PC-9 (cell line): ENCODE measurements at regions of chr7 and their contacts with region 1.

Region 1: DNA sequence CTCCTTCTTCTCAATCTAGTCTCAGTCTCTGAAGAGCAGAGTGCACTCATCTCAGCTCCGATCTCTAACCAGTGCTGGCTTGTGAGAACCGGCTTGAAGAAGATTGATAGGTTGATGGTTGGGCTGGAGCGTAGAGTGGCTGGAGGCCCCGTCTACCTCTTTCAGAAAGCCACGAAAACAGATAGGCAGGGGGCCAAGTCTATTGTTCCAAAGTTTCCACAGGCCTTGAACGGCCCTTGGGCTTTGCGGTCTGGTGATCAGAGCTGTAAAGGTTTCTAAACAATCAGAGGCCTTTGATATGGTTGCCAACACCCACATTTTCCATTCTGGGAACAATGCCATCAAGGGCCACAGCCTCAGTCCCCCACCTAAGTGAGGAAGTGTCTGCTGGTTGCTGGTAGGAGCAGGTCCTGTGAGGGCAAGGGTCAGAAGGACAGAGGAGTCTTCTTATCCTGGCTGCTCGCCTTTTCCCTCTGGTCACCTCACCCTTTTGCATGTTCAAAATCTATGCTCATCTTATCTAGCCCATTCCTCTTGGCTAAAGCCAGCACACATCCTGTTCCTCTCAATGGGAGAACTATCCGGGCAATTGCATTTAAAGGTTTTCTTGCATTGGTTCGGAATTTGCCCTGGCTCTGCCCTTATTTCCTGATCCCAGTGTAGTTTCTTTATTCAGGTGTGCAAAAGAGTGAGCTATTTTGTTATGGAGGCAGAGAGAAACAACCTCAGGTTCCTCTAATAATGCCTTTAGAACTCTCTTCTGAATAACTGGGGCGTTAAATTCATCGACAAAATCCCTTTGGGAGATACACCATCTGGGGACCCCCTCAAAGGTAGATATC is 70.3 kb upstream of the KMT2E start:
- DNase-seq: peak; percentile 48 to 96
- H3K4me3 ChIP-seq: no peak overlapping the region
- H3K27ac ChIP-seq: no peak overlapping the region
- H3K4me1 ChIP-seq: no peaks in the 10 kb centered on the region; the same call in 1 of the 2 replicates
- H3K27me3 ChIP-seq: no peaks in the 10 kb centered on the region
- CTCF ChIP-seq: no peak

Region 2: DNA sequence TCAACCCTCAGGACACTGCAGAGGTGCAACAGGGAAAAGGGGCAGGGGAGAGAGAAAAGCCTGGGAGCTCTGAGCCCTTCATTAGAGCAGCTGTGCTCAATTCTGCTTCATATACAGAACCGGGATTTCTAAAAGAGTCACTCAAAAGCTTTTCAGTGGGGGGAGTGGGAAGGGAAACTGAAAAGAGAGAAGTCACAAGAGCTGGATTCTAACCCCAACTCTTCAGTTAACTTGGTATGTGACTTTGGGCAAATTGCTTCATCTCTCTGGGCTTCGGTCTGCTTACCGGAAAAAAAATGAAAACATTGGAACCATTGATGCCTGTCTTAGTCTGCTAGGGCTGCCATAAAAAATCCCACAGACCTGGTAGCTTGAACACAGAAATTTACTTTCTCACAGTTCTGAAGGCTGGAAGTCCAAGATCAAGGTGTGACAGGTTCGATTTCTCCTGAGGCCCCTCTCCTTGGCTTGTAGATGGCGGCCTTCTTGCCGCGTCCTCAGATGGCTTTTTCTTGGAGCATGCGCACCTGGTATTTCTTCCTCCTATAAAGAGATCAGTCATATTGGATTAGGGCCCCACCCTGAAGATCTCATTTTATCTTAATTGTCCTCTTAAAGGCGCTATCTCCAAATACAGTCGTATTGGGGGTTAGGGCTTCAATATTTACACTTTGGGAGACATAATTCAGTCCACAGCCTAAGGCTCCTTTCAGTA is 48.0 kb before region 1 on chr7:
- CTCF ChIA-PET with region 1: no interaction called
- POLR2A ChIA-PET with region 1: no interaction called
- intact Hi-C with region 1: no loop called
- DNase-seq: no peak
- H3K4me3 ChIP-seq: no peak overlapping the region
- H3K27ac ChIP-seq: no peak overlapping the region
- H3K4me1 ChIP-seq: no peaks in the 10 kb centered on the region
- H3K27me3 ChIP-seq: peaks cover 13% of the 10 kb centered on the region
- CTCF ChIP-seq: no peak

Region 3: GRCh38 chr7:105098863-105099515 is 155.3 kb after region 1 on chr7:
- CTCF ChIA-PET with region 1: no interaction called
- POLR2A ChIA-PET with region 1: no interaction called
- intact Hi-C with region 1: loop called (anchors 1 kb)
- DNase-seq: peak in 1 of 2 experiments; percentile 75
- H3K4me3 ChIP-seq: no peak overlapping the region
- H3K27ac ChIP-seq: peak overlapping the region; percentile 60
- H3K4me1 ChIP-seq: peaks cover 7% of the 10 kb centered on the region; the same call in 1 of the 2 replicates
- H3K27me3 ChIP-seq: no peaks in the 10 kb centered on the region
- CTCF ChIP-seq: no peak

Region 4: GRCh38 chr7:105219780-105220160 is 276.0 kb after region 1 on chr7:
- CTCF ChIA-PET with region 1: no interaction called
- POLR2A ChIA-PET with region 1: no interaction called
- intact Hi-C with region 1: no loop called
- DNase-seq: peak; percentile 26 to 96
- H3K4me3 ChIP-seq: no peak overlapping the region
- H3K27ac ChIP-seq: peak overlapping the region; percentile 80
- H3K4me1 ChIP-seq: peaks cover 43% of the 10 kb centered on the region
- H3K27me3 ChIP-seq: no peaks in the 10 kb centered on the region
- CTCF ChIP-seq: no peak

Region 5: DNA sequence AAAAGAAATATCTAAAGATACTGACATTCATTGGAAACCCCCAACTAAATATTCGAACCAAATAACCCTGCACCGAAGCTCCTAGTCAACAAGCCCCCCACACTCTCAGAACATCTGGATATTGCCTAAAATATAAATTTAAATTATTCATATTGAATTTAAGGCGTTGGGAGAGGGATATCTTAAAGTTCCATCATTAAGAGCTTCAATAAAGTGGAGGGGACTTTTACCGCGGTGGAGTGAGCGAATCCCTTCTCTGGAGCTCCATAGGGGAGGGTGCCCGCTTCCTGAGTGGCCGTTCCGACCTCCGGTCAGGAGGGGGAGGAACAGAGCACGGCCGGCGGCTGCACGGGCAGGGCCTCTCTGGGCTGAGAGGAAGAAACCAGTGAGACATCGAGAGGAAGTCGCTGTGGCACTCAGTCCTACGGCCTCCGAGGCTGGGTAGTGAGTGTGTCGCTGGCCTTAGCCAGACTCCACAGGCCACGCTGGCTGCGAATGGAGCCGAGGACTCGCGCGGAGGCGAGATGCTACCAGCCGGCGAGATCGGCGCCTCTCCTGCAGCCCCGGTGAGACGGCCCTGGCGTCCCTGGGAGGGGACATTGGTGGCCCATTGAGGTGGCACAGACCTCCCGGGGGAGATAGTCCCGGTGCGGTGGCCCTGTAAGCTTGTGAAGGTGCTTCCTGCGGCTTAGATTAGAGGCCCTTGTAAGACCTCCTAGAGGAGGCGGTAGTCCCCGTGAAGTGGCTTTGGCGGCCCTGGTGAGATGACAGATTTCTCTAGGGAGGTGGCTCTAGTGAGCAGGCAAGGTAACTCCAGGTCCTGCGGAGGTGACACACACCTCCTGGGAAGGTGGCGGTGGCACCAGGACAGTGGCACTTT is 588.3 kb after region 1 on chr7 and contains the start of gene RINT1:
- CTCF ChIA-PET with region 1: no interaction called
- POLR2A ChIA-PET with region 1: no interaction called
- intact Hi-C with region 1: loop called (anchors 5 kb)
- DNase-seq: peak; percentile 85 to 96
- H3K4me3 ChIP-seq: peak within 1 kb of the TSS; percentile 89
- H3K27ac ChIP-seq: peak within 1 kb of the TSS; percentile 66
- H3K4me1 ChIP-seq: peaks cover 11% of the 10 kb centered on the region
- H3K27me3 ChIP-seq: no peaks in the 10 kb centered on the region
- CTCF ChIP-seq: peak; percentile 56; the same call in 1 of the 2 replicates
- total RNA-seq, gene RINT1: 21.4 and 25.1 TPM in 2 replicates

Region 6: GRCh38 chr7:106064771-106065585 is 1121.3 kb after region 1 on chr7:
- CTCF ChIA-PET with region 1: no interaction called
- POLR2A ChIA-PET with region 1: no interaction called
- intact Hi-C with region 1: loop called (anchors 5 kb)
- DNase-seq: peak; percentile 93 to 97
- H3K4me3 ChIP-seq: peak overlapping the region; percentile 63
- H3K27ac ChIP-seq: peak overlapping the region; percentile 98
- H3K4me1 ChIP-seq: peaks cover 85% of the 10 kb centered on the region
- H3K27me3 ChIP-seq: no peaks in the 10 kb centered on the region
- CTCF ChIP-seq: no peak